ENCODE measurements at regions of chr2 and their contacts with region 1.

Region 1: GRCh38 chr2:119407430-119408220 is 24.0 kb upstream of the TMEM37 start:
- DNase-seq: peak; percentile 62
- H3K4me3 Mint-ChIP-seq: no peak overlapping the region
- H3K27ac Mint-ChIP-seq: no peak overlapping the region
- H3K4me1 Mint-ChIP-seq: no peaks in the 10 kb centered on the region
- H3K27me3 Mint-ChIP-seq: no peaks in the 10 kb centered on the region
- CTCF ChIP-seq: peak; percentile 77

Region 2: GRCh38 chr2:119476301-119477021 is 68.8 kb after region 1 on chr2:
- CTCF ChIA-PET with region 1: interaction called, 4 read pairs
- intact Hi-C with region 1: loop called (anchors 1 kb)
- DNase-seq: peak; percentile 67
- H3K4me3 Mint-ChIP-seq: no peak overlapping the region
- H3K27ac Mint-ChIP-seq: no peak overlapping the region
- H3K4me1 Mint-ChIP-seq: peaks cover 8% of the 10 kb centered on the region
- H3K27me3 Mint-ChIP-seq: no peaks in the 10 kb centered on the region
- CTCF ChIP-seq: peak; percentile 91

Measured in Calu3 (cell line).